Endothelial cell of umbilical vein (primary cell): ENCODE measurements at regions of chr1 and their contacts with region 1.

Region 1: DNA sequence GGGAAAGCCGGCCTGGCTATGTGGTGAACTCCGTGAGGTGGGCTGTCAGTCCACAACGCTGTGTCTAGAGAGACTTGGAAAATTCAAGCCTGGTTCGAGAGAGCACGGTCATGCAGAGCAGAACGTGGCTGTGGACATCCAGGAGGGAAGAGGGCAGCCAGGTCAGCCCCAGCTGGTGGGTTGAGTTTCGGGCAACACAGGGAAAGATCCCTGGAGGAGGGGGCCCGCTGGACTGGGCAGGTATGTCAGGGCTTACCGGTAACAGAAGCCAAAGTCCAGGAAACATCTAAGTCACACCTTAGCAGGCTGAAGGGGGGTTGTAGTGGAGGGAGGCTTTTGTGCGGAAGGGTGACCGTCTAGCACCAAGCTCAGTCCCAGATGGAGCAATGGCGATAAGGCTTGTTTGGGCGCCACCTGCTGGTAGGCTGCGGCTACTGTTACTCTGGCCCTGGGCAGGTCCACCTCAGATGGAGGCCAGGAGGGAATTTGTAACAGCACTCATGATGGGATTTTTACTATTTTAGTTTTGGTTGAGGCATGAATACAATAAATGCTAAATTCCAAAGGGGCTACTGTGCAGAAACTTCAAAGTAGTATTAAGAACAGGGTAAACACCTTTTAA is 143.3 kb upstream of the ZNF644 start:
- DNase-seq: peak; percentile 52
- H3K4me3 ChIP-seq: no peak overlapping the region
- H3K27ac ChIP-seq: no peak overlapping the region
- H3K4me1 ChIP-seq: no peaks in the 10 kb centered on the region
- H3K27me3 ChIP-seq: no peaks in the 10 kb centered on the region
- CTCF ChIP-seq: peak; percentile 97 to 98
- POLR2A ChIP-seq: no peak

Region 2: GRCh38 chr1:90114521-90115141 is 1050.5 kb before region 1 on chr1:
- CTCF ChIA-PET with region 1: interaction called, 53 read pairs
- POLR2A ChIA-PET with region 1: no interaction called
- dilution Hi-C with region 1: no loop called
- intact Hi-C with region 1: loop called (anchors 1 kb)
- DNase-seq: peak; percentile 59
- H3K4me3 ChIP-seq: no peak overlapping the region
- H3K27ac ChIP-seq: no peak overlapping the region
- H3K4me1 ChIP-seq: no peaks in the 10 kb centered on the region
- H3K27me3 ChIP-seq: peaks cover 7 to 9% of the 10 kb centered on the region in 2 experiments
- CTCF ChIP-seq: peak; percentile 34 to 52
- POLR2A ChIP-seq: no peak

Region 3: DNA sequence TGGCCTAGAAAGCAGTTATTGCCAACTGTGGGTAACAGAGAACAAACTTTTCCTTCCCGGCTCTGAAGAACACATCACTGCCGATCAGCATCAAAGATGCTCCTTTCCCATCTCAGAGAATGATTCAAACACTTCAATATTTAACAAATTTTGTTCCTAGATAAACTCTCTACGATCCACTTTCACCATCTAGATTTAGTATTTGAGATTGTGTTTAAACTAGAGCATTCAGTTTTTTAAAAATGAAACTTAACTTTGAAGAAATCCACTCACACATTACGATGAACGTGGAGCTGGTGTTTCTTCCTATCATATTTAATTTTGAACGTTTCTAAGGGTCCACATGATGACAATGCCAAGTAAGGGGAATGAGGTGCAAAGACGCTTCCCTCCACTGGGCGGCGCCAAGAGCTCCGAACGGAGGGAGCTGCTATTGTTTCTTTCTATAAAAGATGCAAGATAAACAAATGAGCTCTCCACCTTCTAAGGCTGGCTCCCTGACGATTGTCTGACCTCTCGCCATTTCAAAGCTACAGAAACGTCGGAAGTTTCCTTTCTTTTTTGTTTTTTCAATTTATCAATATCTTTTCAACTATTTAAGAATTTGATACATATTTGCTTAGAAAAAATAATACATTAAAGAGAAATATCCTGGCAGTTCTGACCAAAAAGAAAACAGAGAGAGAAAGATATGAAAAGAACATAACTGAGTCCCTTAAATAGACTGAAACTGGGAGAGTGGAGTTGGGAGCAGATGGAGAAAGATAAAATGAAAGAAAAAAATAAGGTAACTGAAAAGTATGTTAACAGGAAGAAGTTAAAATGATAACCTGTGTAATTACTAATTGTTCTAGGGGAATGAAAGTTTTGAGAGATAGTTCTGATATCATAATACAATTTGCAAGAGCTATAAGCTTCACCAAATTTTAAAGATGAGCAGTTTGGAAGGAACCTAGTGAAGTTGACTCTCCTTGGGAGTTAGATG is 443.6 kb before region 1 on chr1:
- CTCF ChIA-PET with region 1: interaction called, 117 read pairs
- POLR2A ChIA-PET with region 1: no interaction called
- dilution Hi-C with region 1: no loop called
- intact Hi-C with region 1: loop called (anchors 1 kb)
- DNase-seq: peak; percentile 75
- H3K4me3 ChIP-seq: no peak overlapping the region
- H3K27ac ChIP-seq: no peak overlapping the region
- H3K4me1 ChIP-seq: peaks cover 2% of the 10 kb centered on the region
- H3K27me3 ChIP-seq: peaks cover 85 to 97% of the 10 kb centered on the region in 2 experiments
- CTCF ChIP-seq: peak; percentile 87 to 96
- POLR2A ChIP-seq: no peak

Region 4: GRCh38 chr1:91021686-91022517 is 143.2 kb before region 1 on chr1 and contains the start of gene ZNF644:
- CTCF ChIA-PET with region 1: interaction called, 10 read pairs
- POLR2A ChIA-PET with region 1: no interaction called
- dilution Hi-C with region 1: no loop called
- intact Hi-C with region 1: loop called (anchors 5 kb)
- DNase-seq: peak; percentile 84
- H3K4me3 ChIP-seq: peak within 1 kb of the TSS; percentile 72 to 99 (median 96)
- H3K27ac ChIP-seq: peak within 1 kb of the TSS; percentile 97
- H3K4me1 ChIP-seq: peaks cover 19% of the 10 kb centered on the region
- H3K27me3 ChIP-seq: no peaks in the 10 kb centered on the region
- CTCF ChIP-seq: no peak
- POLR2A ChIP-seq: peak; percentile 53
- total RNA-seq, gene ZNF644: 38.7 and 47.0 TPM in 2 replicates

Region 5: DNA sequence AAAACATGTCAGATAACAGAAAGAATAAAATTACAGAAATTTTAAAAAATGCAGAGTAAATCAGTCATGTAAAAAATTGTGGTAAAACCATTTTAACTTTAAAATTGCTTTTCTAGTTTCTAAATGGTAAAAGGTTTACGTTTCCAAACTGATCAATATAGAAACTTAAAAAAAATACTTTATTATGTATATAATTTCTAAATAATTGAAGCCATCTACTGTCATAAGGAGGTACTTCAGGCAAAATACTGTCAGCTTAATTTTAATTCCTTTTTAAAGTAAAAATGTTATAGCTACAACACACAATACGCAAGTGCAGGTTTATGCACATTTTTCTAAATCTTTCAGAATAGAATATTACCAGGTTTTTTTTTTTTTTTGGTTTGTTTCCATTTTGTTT is 79.6 kb after region 1 on chr1:
- CTCF ChIA-PET with region 1: interaction called, 22 read pairs
- POLR2A ChIA-PET with region 1: no interaction called
- dilution Hi-C with region 1: no loop called
- intact Hi-C with region 1: no loop called
- DNase-seq: no peak
- H3K4me3 ChIP-seq: no peak overlapping the region
- H3K27ac ChIP-seq: no peak overlapping the region
- H3K4me1 ChIP-seq: no peaks in the 10 kb centered on the region
- H3K27me3 ChIP-seq: peaks cover 0 to 1% of the 10 kb centered on the region in 2 experiments
- CTCF ChIP-seq: no peak
- POLR2A ChIP-seq: no peak

Region 6: DNA sequence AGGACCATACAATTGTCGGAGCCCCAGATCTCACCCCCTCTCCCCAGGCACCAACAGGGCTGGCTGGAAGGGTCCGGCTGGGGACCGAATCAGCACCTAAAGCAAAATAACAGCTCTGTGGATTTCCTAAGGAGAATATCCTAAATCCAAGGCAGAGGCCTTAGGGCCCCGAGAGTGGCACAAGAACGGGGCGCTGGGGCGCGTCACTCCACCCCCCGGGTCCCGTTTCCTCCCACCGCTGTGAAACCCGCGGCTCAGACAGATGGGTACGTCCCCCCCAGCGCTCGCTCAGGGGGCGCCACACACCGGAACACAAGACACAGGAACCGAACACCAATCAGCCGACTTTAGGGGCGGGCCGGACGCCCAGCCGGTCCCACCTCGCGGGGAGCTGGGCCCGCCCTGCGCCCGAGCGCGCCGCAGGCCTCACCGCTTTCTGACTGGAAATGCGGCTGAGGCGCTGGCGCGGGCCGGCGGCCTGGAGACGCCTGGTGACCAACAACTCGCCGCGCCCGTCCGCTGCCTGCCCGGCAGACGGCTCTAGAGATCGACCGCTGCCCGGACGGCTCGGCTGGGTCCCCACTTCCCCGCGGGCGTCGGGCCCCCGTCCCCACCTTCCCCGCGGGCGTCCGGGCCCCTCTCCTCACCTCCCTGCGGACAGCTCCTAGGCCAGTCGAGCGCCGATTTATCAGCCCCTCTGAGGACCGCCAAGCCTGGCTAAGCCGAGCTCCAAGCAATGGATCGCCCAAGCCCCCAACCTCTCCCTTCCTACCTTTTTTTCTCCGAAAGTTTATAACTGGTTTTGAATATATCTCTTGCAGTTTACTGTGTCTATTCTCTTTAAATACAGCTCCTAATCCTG is 239.2 kb after region 1 on chr1 and contains the start of gene HFM1:
- CTCF ChIA-PET with region 1: interaction called, 18 read pairs
- POLR2A ChIA-PET with region 1: no interaction called
- dilution Hi-C with region 1: no loop called
- intact Hi-C with region 1: loop called (anchors 1 kb)
- DNase-seq: peak; percentile 58
- H3K4me3 ChIP-seq: peak within 1 kb of the TSS; percentile 57 to 74 (median 71)
- H3K27ac ChIP-seq: no peak within 1 kb of the TSS
- H3K4me1 ChIP-seq: peaks cover 3% of the 10 kb centered on the region
- H3K27me3 ChIP-seq: peaks cover 4 to 13% of the 10 kb centered on the region in 2 experiments
- CTCF ChIP-seq: no peak
- POLR2A ChIP-seq: no peak
- total RNA-seq, gene HFM1: 0.11 and 0.72 TPM in 2 replicates

Region 7: GRCh38 chr1:91929250-91929649 is 764.1 kb after region 1 on chr1:
- CTCF ChIA-PET with region 1: interaction called, 12 read pairs
- POLR2A ChIA-PET with region 1: no interaction called
- dilution Hi-C with region 1: no loop called
- intact Hi-C with region 1: loop called (anchors 5 kb)
- DNase-seq: peak; percentile 53
- H3K4me3 ChIP-seq: no peak overlapping the region
- H3K27ac ChIP-seq: no peak overlapping the region
- H3K4me1 ChIP-seq: peaks cover 4% of the 10 kb centered on the region
- H3K27me3 ChIP-seq: no peaks in the 10 kb centered on the region
- CTCF ChIP-seq: no peak
- POLR2A ChIP-seq: no peak